CD8-positive, alpha-beta T cell (primary cell): ENCODE measurements at regions of chr5 and their contacts with region 1.

Region 1: DNA sequence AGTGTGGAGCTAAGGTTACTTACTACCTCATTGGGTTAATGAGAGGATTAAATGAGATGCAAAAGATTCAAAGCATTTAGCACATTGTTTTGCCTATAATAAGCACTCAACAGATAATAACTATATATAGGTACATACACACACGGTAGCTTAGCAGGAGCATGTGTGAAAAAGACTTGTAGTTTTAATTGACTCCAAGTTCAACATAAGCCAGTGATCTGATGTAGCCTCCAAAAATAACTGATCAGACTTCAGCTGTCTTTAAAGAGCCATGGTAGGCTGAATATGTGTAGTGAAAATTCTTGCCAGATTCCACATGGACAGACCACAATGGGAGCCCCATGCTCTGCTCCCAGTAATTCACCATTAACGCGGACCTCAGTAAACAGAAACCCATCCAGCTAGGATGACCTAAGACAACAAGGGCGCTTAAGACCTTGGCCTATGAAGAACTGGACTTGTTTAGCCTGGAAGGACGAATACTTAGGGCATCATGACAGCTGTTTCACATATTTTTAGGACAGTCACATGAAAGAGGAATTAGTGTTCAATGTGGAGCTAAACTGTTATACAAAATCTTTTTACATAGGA is 115.1 kb upstream of the ZNF366 start:
- DNase-seq: no peak
- ATAC-seq: no peak
- H3K4me3 ChIP-seq: no peak overlapping the region
- H3K4me3 Mint-ChIP-seq: no peak overlapping the region
- H3K27ac ChIP-seq: no peak overlapping the region
- H3K27ac Mint-ChIP-seq: no peak overlapping the region
- H3K4me1 ChIP-seq: no peaks in the 10 kb centered on the region
- H3K4me1 Mint-ChIP-seq: no peaks in the 10 kb centered on the region
- H3K27me3 ChIP-seq: no peaks in the 10 kb centered on the region
- H3K27me3 Mint-ChIP-seq: peaks cover 11% of the 10 kb centered on the region
- CTCF ChIP-seq: no peak

Region 2: DNA sequence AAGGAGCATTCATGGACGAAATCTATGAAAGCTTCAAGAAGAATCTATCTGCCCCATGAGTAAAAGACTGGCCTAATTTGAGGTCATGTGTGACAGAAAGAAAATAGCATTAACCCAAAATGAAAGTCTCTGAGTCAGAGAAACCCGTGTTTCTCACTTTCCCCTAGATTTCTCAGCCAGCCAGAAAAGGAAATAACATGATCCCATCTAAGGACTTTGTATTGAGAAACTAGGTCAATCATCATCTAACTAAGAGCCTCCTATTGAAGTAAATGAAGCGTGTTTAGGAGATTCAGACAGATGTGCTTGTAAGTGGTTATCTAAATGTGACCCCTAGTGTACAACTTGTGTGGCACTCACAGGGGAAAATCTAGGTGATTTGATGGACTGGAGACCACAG is 37.8 kb before region 1 on chr5:
- CTCF ChIA-PET with region 1: no interaction called
- POLR2A ChIA-PET with region 1: no interaction called
- intact Hi-C with region 1: no loop called
- DNase-seq: no peak
- ATAC-seq: no peak
- H3K4me3 ChIP-seq: no peak overlapping the region
- H3K4me3 Mint-ChIP-seq: no peak overlapping the region
- H3K27ac ChIP-seq: no peak overlapping the region
- H3K27ac Mint-ChIP-seq: no peak overlapping the region
- H3K4me1 ChIP-seq: no peaks in the 10 kb centered on the region
- H3K4me1 Mint-ChIP-seq: no peaks in the 10 kb centered on the region
- H3K27me3 ChIP-seq: no peaks in the 10 kb centered on the region
- H3K27me3 Mint-ChIP-seq: peaks cover 9% of the 10 kb centered on the region
- CTCF ChIP-seq: no peak

Region 3: GRCh38 chr5:72611118-72611730 is 11.0 kb before region 1 on chr5:
- CTCF ChIA-PET with region 1: interaction called, 13 read pairs
- POLR2A ChIA-PET with region 1: no interaction called
- intact Hi-C with region 1: no loop called
- DNase-seq: peak; percentile 1 to 56 (median 34)
- ATAC-seq: peak; percentile 62
- H3K4me3 ChIP-seq: no peak overlapping the region
- H3K4me3 Mint-ChIP-seq: no peak overlapping the region
- H3K27ac ChIP-seq: no peak overlapping the region
- H3K27ac Mint-ChIP-seq: no peak overlapping the region
- H3K4me1 ChIP-seq: no peaks in the 10 kb centered on the region
- H3K4me1 Mint-ChIP-seq: no peaks in the 10 kb centered on the region
- H3K27me3 ChIP-seq: no peaks in the 10 kb centered on the region
- H3K27me3 Mint-ChIP-seq: peaks cover 10% of the 10 kb centered on the region
- CTCF ChIP-seq: peak; percentile 74